ENCODE measurements at regions of chr14 and their contacts with region 1.

Region 1: DNA sequence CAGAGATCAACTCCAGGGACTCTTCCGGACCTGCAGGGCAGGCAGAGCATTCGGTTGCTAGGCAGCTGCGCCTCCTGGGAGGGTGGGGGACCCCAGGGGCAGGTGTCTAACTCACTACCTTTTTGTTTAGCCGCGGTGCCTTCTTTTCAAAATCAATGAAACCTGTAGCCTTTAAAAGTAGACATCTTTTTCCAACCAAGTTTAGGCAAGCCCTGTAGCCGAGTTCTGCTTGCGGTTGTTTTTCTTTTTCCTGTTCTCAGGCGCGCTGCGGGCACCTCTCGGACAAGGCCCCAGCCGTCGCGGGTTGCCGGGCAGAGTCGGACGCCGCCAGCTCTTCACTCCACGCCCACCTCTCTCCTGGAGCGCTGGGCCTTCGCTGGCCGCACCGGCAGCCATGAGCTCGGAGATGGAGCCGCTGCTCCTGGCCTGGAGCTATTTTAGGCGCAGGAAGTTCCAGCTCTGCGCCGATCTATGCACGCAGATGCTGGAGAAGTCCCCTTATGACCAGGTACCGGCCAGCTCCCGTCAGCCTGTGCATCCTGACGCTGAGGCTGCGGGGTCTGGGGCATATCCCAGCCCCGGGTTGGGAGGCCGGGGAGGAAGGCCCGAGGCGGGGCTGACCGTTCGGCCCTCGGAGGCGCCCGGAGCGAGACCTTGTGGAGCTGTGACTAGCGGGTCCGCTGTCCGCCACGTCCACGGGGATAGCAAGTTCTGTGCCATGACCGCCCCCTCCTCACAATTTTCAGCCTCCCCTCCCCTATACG is at the start of gene TTC8:
- DNase-seq: peak; percentile 90 to 93
- ATAC-seq: peak; percentile 99
- H3K4me3 ChIP-seq: peak within 1 kb of the TSS; percentile 85
- H3K27ac ChIP-seq: peak within 1 kb of the TSS; percentile 93 to 96
- H3K4me1 ChIP-seq: peaks cover 29% of the 10 kb centered on the region
- CTCF ChIP-seq: no peak
- EP300 ChIP-seq: no peak
- POLR2A ChIP-seq: peak; percentile 96
- RAD21 ChIP-seq: peak in 1 of 2 experiments; percentile 5; a peak in 1 of 5 replicates
- polyA plus RNA-seq, gene TTC8: 55.1 and 56.8 TPM in 2 replicates

Region 2: DNA sequence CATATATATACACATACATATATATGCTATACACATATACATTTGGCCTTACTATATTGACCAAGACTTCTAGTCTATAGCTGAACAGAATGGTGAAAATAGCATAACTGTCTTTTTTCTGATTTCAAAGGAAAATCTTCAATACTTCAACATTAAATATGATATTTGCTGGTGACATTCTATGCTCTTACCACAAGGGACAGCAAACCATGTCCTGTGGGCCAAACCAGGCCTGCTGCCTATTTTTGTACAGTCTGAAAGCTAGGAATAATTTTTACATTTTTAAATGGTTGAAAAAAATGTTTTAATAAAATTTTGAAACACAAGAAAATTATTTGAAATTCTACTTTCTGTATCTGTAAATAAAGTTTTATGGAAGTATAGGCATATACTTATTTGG is 95.3 kb before region 1 on chr14:
- CTCF ChIA-PET with region 1: no interaction called
- POLR2A ChIA-PET with region 1: no interaction called
- DNase-seq: peak; percentile 13
- ATAC-seq: peak in 1 of 2 experiments; percentile 60; a peak in 2 of 6 replicates
- H3K4me3 ChIP-seq: no peak overlapping the region
- H3K27ac ChIP-seq: no peak overlapping the region
- H3K4me1 ChIP-seq: no peaks in the 10 kb centered on the region
- CTCF ChIP-seq: no peak
- EP300 ChIP-seq: no peak
- POLR2A ChIP-seq: no peak
- RAD21 ChIP-seq: 0 out of 5 replicates have a peak, but pooled peaks of 1 of the 2 experiments have one; percentile 18

Region 3: DNA sequence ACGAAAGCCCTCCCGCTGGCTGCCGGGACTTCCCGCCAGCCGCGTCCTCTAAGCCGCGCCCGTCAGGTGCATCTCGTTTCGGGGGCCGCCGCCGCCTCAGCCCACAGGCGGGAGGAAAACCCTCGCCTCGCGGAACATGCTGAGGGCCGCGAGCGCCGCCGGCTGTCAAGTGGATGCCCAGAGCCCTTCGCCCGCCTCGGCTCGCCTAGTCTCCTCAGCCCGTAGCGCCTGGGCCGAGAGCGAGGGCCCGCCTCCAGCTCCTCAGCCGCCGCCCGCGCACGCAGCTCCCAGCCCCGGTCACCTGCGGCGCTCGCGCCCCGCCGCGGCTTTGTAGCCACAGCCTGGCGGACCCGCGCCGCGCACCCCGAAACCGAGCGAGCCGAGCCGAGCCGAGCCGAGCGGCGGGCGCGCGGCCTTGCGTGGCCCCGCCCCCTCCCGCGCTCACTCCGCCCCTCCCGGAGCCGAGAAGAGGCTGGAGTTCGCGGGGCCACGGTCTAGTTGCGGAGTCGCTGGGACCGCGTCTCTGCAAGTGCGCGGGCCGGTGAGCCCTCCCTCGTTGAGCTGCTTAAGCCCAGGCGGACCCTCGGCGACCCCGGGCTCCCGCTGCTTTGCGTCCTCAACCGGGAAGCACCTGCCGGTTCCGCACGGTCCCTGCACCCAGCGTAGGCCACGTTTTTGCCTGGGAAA is 31.8 kb before region 1 on chr14 and contains the start of gene EML5:
- CTCF ChIA-PET with region 1: interaction called, 19 read pairs
- POLR2A ChIA-PET with region 1: interaction called, 12 read pairs
- DNase-seq: peak; percentile 54 to 63
- ATAC-seq: peak; percentile 94 to 96
- H3K4me3 ChIP-seq: peak within 1 kb of the TSS; percentile 62
- H3K27ac ChIP-seq: peak within 1 kb of the TSS; percentile 62 to 81
- H3K4me1 ChIP-seq: 0 out of 3 replicates have a peak, but pooled peaks cover 5% of the 10 kb centered on the region
- CTCF ChIP-seq: peak; percentile 37; the same call in 2 of the 3 replicates
- EP300 ChIP-seq: no peak
- POLR2A ChIP-seq: peak; percentile 46; the same call in 1 of the 2 replicates
- RAD21 ChIP-seq: peak in 1 of 2 experiments; percentile 58; a peak in 3 of 5 replicates
- polyA plus RNA-seq, gene EML5: 0.40 and 0.62 TPM in 2 replicates

Measured in A549 (cell line).